SK-N-SH (cell line): ENCODE measurements at regions of chr17 and their contacts with region 1.

Region 1: DNA sequence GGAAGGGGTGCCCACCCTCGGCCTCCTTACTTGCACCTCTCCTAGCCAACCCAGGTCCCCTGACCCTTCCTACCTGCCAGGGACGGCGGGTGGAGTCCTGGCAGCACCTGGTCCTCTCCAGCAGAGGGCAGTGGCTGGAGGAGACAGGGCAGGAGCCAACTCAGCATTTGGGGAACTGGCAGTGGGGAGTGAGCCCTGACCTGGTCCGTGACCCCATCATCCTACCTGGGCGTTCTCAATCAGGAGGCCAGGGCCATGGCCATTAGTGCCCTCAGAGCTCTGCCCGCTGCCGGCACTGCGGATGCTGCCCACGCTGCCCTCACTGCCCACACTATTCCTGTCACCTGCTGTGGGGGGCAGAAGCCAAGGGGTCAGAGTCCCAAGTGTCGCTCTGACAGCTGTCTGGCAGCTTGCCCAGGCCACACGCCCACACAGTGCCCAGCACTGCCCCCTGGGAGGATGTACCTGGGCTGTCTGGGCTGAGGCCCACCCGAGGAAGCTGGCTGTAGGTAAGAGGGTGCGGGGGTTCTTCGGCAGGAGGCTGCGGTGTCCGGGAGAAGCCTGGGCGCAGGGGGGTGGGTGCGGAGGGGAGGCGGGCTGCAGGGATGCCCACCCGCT is 10.9 kb downstream of the CASKIN2 start:
- DNase-seq: peak; percentile 86
- H3K4me3 ChIP-seq: no peak overlapping the region
- H3K27ac ChIP-seq: no peak overlapping the region
- H3K4me1 ChIP-seq: peaks cover 5 to 6% of the 10 kb centered on the region in 2 experiments; a peak in 1 of 4 replicates
- H3K27me3 ChIP-seq: no peaks in the 10 kb centered on the region
- CTCF ChIP-seq: peak; percentile 67
- EP300 ChIP-seq: no peak
- RAD21 ChIP-seq: peak; percentile 49

Region 2: GRCh38 chr17:75325827-75326225 is 178.6 kb before region 1 on chr17:
- CTCF ChIA-PET with region 1: no interaction called
- POLR2A ChIA-PET with region 1: no interaction called
- DNase-seq: no peak
- H3K4me3 ChIP-seq: no peak overlapping the region
- H3K27ac ChIP-seq: peak overlapping the region in 1 of 2 experiments; percentile 62; a peak in 2 of 4 replicates
- H3K4me1 ChIP-seq: peaks cover 3 to 16% of the 10 kb centered on the region in 2 experiments; a peak in 3 of 4 replicates
- H3K27me3 ChIP-seq: no peaks in the 10 kb centered on the region
- CTCF ChIP-seq: no peak
- EP300 ChIP-seq: no peak
- RAD21 ChIP-seq: no peak

Region 3: GRCh38 chr17:75338335-75338734 is 166.1 kb before region 1 on chr17:
- CTCF ChIA-PET with region 1: no interaction called
- POLR2A ChIA-PET with region 1: no interaction called
- DNase-seq: no peak
- H3K4me3 ChIP-seq: no peak overlapping the region
- H3K27ac ChIP-seq: peak overlapping the region in 1 of 2 experiments; percentile 19; a peak in 1 of 4 replicates
- H3K4me1 ChIP-seq: peaks cover 6 to 9% of the 10 kb centered on the region in 2 experiments; a peak in 3 of 4 replicates
- H3K27me3 ChIP-seq: no peaks in the 10 kb centered on the region
- CTCF ChIP-seq: no peak
- EP300 ChIP-seq: no peak
- RAD21 ChIP-seq: no peak

Region 4: DNA sequence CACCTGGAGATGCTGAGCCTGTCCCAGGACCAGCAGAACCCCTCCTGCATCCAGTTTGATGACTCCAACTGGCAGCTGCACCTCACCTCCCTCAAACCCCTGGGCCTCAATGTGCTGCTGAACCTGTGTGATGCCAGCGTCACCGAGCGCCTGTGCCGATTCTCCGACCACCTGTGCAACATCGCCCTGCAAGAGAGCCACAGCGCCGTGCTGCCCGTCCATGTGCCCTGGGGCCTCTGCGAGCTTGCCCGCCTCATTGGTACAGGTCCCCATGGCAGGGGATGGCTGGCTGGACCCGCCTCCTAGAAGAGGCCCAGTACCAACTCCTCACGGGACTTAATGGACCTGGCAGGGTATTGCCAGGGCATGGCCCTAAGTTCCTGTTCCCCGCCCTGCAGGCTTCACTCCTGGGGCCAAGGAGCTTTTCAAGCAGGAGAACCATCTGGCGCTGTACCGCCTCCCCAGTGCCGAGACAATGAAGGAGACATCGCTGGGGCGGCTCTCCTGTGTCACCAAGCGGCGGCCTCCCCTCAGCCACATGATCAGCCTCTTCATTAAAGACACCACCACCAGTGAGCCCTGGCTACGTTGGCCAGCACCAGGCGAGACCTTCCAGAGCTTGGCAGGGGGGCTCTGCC is 11.8 kb before region 1 on chr17:
- CTCF ChIA-PET with region 1: interaction called, 27 read pairs
- POLR2A ChIA-PET with region 1: interaction called, 7 read pairs
- DNase-seq: no peak
- H3K4me3 ChIP-seq: no peak overlapping the region
- H3K27ac ChIP-seq: no peak overlapping the region
- H3K4me1 ChIP-seq: peaks cover 0 to 3% of the 10 kb centered on the region in 2 experiments; a peak in 1 of 4 replicates
- H3K27me3 ChIP-seq: no peaks in the 10 kb centered on the region
- CTCF ChIP-seq: no peak
- EP300 ChIP-seq: no peak
- RAD21 ChIP-seq: no peak